ENCODE measurements at regions of chr2 and their contacts with region 1.

Region 1: DNA sequence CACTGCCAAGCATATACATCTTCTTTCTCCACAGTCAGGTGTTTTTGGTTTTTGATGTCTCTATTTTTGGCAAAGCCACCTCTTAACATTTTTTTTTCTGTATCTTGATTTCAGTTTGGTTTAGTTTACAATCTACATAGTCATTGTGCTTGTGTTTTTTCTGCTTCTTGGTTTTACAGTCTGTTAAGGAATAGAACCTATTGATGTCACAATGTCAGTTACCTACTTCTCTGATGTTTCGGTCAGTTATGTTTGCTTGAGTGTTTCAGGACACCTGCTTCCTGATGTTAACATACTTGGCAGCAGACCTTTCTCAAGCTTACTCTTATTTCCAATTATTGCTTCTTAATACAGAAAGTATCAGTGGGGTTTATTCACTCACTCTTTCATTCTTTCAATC is 253.3 kb downstream of the SPAG16 start:
- DNase-seq: no peak
- CTCF ChIP-seq: no peak

Region 2: DNA sequence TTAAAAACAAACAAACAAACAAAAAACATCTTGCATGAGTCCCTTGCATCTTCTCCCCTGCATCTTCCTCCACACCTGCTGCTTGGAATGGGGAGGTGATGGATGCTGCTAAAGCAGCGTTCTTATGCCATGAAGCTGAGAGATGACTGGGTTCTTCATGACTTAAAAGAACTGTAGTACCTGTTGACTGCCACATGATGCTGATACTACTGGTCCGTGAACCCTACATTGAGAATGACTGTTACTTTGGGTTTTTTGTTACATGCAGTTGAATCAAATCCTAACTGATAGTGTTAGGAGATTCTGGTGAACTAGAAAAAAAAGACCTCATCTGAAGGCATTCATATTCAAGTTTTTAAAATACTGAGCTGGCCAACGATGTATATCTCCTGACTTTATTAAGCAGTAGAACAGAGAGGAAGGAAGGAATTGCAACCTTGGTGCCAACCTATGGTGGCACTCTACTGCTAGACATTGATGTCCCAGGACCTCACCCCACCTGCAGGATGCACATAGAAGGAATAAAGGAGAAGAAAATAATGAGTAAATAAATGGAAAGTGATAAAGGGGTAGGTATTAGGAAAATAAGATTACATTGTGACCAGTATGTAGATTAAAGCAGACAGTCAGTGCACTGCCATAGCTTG is 316.5 kb before region 1 on chr2:
- CTCF ChIA-PET with region 1: no interaction called
- POLR2A ChIA-PET with region 1: no interaction called
- DNase-seq: no peak
- CTCF ChIP-seq: no peak

Region 3: DNA sequence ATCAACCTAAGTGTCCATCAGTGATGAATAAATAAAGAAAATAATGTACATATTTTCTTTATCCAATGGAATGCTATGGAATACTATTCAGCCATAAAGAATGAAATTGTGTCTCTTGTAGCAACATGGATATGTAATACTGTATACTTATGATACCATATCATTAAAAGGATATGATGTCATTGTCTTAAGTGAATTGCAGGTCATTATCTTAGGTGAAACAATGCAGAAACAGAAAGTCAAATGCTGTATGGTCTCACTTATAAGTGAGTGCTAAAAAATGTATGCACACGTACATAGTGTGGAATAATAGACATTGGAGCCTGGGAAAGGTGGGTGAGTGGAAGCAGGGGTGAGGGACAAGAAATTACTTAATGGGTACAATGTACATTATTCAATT is 102.5 kb before region 1 on chr2:
- CTCF ChIA-PET with region 1: no interaction called
- POLR2A ChIA-PET with region 1: no interaction called
- DNase-seq: no peak
- CTCF ChIP-seq: no peak

Region 4: DNA sequence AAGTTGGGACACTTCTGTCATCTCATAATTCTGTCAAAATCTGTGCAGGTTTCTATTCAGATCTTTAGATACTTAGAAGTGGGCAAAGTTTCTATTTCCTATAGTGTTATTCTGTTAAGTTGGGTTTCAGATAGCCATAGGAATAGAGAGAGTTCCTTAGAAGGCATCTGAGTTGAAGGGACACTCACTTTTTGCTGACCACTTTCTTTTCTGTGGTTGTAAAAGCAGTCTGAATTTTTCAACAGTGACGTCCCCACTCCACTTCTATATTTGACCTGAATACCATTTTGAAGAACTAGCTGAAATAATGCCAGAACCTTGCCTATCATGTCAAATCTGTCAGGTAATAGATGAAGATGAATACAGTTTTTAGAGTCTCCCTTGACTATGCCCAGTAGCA is 13.9 kb after region 1 on chr2:
- CTCF ChIA-PET with region 1: interaction called, 10 read pairs
- POLR2A ChIA-PET with region 1: no interaction called
- DNase-seq: no peak
- CTCF ChIP-seq: no peak

Measured in GM10248 (cell line).